ENCODE measurements at regions of chr6 and their contacts with region 1.

Region 1: GRCh38 chr6:5898559-5898958 is 108.2 kb downstream of the NRN1 start:
- DNase-seq: no peak
- H3K4me3 ChIP-seq: no peak overlapping the region
- H3K27ac ChIP-seq: no peak overlapping the region
- H3K4me1 ChIP-seq: no peaks in the 10 kb centered on the region
- H3K27me3 ChIP-seq: no peaks in the 10 kb centered on the region
- CTCF ChIP-seq: no peak
- EP300 ChIP-seq: no peak
- POLR2A ChIP-seq: no peak

Region 2: DNA sequence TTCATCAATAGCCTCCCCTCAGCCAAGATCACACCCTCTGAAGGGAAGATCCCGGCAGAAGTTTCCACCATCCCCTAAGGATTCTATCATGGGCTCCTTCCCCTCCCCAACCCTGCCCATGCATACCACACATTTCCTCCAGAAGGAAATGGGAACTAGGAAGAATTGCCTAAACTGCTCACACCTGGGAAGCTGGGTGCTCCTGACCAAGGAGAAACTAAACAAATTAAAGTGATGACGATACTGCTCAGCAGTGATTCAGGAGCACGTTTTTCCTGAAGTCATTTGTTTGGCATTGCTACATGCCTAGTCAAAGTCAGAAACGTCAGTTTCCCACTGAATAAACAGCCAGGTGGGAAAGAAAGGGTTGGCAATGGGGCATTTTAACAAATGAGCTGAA is 1258.4 kb before region 1 on chr6:
- intact Hi-C with region 1: loop called in 1 of 4 experiments (anchors 5 kb)
- DNase-seq: no peak
- H3K4me3 ChIP-seq: no peak overlapping the region
- H3K27ac ChIP-seq: no peak overlapping the region
- H3K4me1 ChIP-seq: no peaks in the 10 kb centered on the region
- H3K27me3 ChIP-seq: no peaks in the 10 kb centered on the region
- CTCF ChIP-seq: no peak
- EP300 ChIP-seq: no peak
- POLR2A ChIP-seq: no peak

Region 3: GRCh38 chr6:5813625-5814027 is 84.9 kb before region 1 on chr6:
- intact Hi-C with region 1: no loop called
- DNase-seq: no peak
- H3K4me3 ChIP-seq: no peak overlapping the region
- H3K27ac ChIP-seq: no peak overlapping the region
- H3K4me1 ChIP-seq: no peaks in the 10 kb centered on the region
- H3K27me3 ChIP-seq: no peaks in the 10 kb centered on the region
- CTCF ChIP-seq: no peak
- EP300 ChIP-seq: no peak
- POLR2A ChIP-seq: no peak